Caco-2 (cell line): ENCODE measurements at regions of chr14 and their contacts with region 1.

Region 1: DNA sequence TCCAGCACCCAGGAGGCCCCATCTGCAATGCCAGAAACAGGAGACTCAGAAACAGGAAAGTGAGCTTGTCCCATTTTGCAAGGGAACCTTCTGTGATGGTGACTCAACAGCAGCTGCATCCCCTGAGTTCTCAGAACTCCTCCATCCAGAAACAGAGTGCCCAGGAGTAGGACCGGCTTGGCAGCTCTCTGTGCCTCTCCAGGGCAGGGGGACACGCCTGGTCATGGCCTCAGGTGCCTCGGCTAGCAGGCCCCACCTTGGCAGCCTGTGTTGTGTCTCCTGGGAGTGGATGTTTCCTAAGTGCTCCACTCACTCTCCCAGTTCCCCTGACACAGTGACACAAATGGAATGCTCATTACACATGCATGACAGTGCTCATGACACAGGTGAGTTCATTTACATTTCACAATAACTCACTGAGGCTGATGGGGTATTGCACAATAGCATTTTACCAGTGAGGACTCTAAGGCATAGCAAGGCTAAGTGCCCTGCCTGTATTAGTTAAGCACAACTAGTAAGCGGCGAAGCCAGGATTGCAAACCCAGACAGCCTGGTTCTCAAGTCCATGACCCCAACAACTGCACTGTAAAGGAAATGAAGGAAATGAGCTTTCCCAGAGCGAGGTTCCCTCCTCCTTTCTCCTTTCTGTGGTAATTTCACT is 47.3 kb downstream of the CALM1 start:
- DNase-seq: peak; percentile 65 to 69
- H3K4me3 ChIP-seq: no peak overlapping the region
- H3K4me3 Mint-ChIP-seq: no peak overlapping the region
- H3K27ac Mint-ChIP-seq: peak overlapping the region; percentile 24
- H3K4me1 ChIP-seq: peaks cover 20% of the 10 kb centered on the region
- H3K4me1 Mint-ChIP-seq: peaks cover 19% of the 10 kb centered on the region
- H3K27me3 ChIP-seq: no peaks in the 10 kb centered on the region
- H3K27me3 Mint-ChIP-seq: no peaks in the 10 kb centered on the region
- CTCF ChIP-seq: no peak

Region 2: DNA sequence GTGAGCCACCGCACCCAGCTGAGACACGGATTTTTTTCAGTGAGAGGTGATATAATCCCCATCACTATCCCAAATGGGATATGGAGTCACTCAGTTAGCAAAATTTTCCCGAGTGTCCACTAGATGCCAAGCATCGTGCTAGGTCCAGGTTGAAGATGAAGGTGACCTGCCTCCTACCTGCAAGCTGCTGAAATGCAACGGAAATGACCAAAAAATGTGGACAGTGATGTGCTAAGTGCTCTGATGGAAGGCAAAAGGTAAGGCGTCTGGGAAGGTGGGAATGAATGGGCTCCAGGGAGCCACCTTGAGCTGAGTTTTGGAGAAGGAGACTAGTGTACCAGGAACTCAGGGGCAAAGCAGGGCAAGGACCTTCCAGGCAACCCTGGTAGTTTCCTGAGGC is 17.3 kb after region 1 on chr14:
- CTCF ChIA-PET with region 1: no interaction called
- POLR2A ChIA-PET with region 1: no interaction called
- intact Hi-C with region 1: no loop called
- DNase-seq: no peak
- H3K4me3 ChIP-seq: no peak overlapping the region
- H3K4me3 Mint-ChIP-seq: no peak overlapping the region
- H3K27ac Mint-ChIP-seq: no peak overlapping the region
- H3K4me1 ChIP-seq: no peaks in the 10 kb centered on the region
- H3K4me1 Mint-ChIP-seq: peaks cover 6% of the 10 kb centered on the region
- H3K27me3 ChIP-seq: no peaks in the 10 kb centered on the region
- H3K27me3 Mint-ChIP-seq: no peaks in the 10 kb centered on the region
- CTCF ChIP-seq: no peak

Region 3: GRCh38 chr14:90518941-90519256 is 74.7 kb after region 1 on chr14:
- CTCF ChIA-PET with region 1: no interaction called
- POLR2A ChIA-PET with region 1: no interaction called
- intact Hi-C with region 1: loop called (anchors 10 kb)
- DNase-seq: peak in 1 of 2 experiments; percentile 54
- H3K4me3 ChIP-seq: no peak overlapping the region
- H3K4me3 Mint-ChIP-seq: no peak overlapping the region
- H3K27ac Mint-ChIP-seq: no peak overlapping the region
- H3K4me1 ChIP-seq: peaks cover 51% of the 10 kb centered on the region
- H3K4me1 Mint-ChIP-seq: peaks cover 19% of the 10 kb centered on the region
- H3K27me3 ChIP-seq: no peaks in the 10 kb centered on the region
- H3K27me3 Mint-ChIP-seq: no peaks in the 10 kb centered on the region
- CTCF ChIP-seq: peak; percentile 23 to 45

Region 4: DNA sequence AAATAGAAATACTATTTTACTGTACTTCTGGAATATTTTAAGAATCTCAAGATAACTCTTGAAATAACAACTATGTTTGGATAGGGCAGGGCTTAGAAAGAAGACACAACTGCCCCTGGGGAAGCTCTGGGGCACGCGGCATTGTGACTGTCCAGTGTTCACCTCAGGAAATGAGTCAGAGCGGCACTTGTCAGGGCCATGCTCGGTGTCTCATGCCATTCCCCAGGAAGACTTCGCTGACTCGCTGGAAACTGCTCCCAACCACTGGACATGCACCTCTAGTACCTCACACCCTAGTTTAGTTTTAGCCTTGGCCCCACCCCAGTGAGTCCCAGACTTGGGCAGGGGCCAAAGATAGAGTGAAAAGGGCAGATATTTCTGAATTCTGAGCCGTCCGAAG is 180.1 kb after region 1 on chr14:
- CTCF ChIA-PET with region 1: no interaction called
- POLR2A ChIA-PET with region 1: no interaction called
- intact Hi-C with region 1: no loop called
- DNase-seq: no peak
- H3K4me3 ChIP-seq: no peak overlapping the region
- H3K4me3 Mint-ChIP-seq: no peak overlapping the region
- H3K27ac Mint-ChIP-seq: peak overlapping the region; percentile 56
- H3K4me1 ChIP-seq: peaks cover 5% of the 10 kb centered on the region; the same call in 1 of the 2 replicates
- H3K4me1 Mint-ChIP-seq: peaks cover 8% of the 10 kb centered on the region
- H3K27me3 ChIP-seq: no peaks in the 10 kb centered on the region
- H3K27me3 Mint-ChIP-seq: no peaks in the 10 kb centered on the region
- CTCF ChIP-seq: no peak